Activated CD4-positive, alpha-beta T cell treated with anti-CD3 and anti-CD28 coated beads, Interleukin-2, amount 10 ng/mL, durations not matched to agents 24 days and 14 days (primary cell): ENCODE measurements at regions of chr1 and their contacts with region 1.

Region 1: DNA sequence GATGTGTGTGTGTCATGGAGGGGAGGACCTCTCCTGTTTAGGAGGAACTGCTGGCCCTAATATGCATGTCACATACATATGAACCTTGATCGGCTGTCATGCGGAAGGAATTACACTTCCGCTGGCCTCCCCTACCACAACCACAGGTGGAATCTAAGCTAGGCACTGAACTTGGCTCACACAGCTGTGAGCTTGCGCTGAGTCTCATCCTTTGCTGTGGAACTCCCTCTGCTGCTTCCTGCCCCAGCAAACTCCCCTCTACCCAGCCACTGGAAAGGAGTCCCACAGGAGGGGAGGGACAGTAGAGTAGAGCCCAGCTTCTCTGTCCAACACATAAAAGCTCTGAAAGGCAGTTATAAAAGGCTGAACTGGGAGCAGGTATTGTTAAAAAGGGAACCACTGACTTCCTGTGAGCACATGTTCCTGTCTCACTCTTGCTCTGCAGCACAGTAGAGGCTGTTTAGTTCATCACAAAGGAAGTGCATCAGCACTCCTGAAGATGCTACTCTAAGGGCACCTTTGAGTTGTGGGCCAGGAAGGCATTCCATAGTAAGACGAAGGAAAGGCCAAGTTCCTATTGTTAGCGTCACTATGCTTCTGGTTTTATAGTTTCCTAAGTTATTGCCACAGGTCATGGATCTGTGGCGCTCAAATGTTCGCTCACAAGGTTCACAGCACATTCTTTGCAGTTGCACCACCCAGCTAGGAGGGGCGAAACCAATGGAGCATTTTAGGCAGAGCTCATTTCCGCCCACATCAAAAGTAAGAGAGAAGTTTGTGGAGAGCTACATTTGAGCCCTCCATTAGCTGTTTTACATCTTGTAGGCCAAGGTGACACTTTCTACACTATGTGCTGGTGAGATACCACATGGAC is 17.7 kb upstream of the PTPRC start:
- DNase-seq: peak; percentile 92
- H3K4me3 Mint-ChIP-seq: peak overlapping the region; percentile 85
- H3K27ac Mint-ChIP-seq: peak overlapping the region; percentile 99
- H3K4me1 Mint-ChIP-seq: peaks cover 64% of the 10 kb centered on the region
- H3K27me3 Mint-ChIP-seq: no peaks in the 10 kb centered on the region

Region 2: GRCh38 chr1:197902454-197903195 is 718.6 kb before region 1 on chr1 and contains the start of gene C1orf53:
- intact Hi-C with region 1: loop called (anchors 10 kb)
- DNase-seq: peak; percentile 94
- H3K4me3 Mint-ChIP-seq: peak within 1 kb of the TSS; percentile 83
- H3K27ac Mint-ChIP-seq: peak within 1 kb of the TSS; percentile 80
- H3K4me1 Mint-ChIP-seq: peaks cover 8% of the 10 kb centered on the region
- H3K27me3 Mint-ChIP-seq: peaks cover 68% of the 10 kb centered on the region
- total RNA-seq, gene C1orf53: 1.0 and 1.3 TPM in 2 replicates

Region 3: GRCh38 chr1:198416296-198416695 is 204.9 kb before region 1 on chr1:
- intact Hi-C with region 1: no loop called
- DNase-seq: no peak
- H3K4me3 Mint-ChIP-seq: no peak overlapping the region
- H3K27ac Mint-ChIP-seq: no peak overlapping the region
- H3K4me1 Mint-ChIP-seq: no peaks in the 10 kb centered on the region
- H3K27me3 Mint-ChIP-seq: peaks cover 33% of the 10 kb centered on the region

Region 4: GRCh38 chr1:198577444-198577843 is 43.7 kb before region 1 on chr1:
- intact Hi-C with region 1: no loop called
- DNase-seq: no peak
- H3K4me3 Mint-ChIP-seq: no peak overlapping the region
- H3K27ac Mint-ChIP-seq: no peak overlapping the region
- H3K4me1 Mint-ChIP-seq: peaks cover 5% of the 10 kb centered on the region
- H3K27me3 Mint-ChIP-seq: no peaks in the 10 kb centered on the region

Region 5: GRCh38 chr1:198601936-198602889 is 19.0 kb before region 1 on chr1:
- intact Hi-C with region 1: loop called (anchors 2 kb)
- DNase-seq: no peak
- H3K4me3 Mint-ChIP-seq: peak overlapping the region; percentile 32
- H3K27ac Mint-ChIP-seq: peak overlapping the region; percentile 83
- H3K4me1 Mint-ChIP-seq: peaks cover 55% of the 10 kb centered on the region
- H3K27me3 Mint-ChIP-seq: no peaks in the 10 kb centered on the region

Region 6: DNA sequence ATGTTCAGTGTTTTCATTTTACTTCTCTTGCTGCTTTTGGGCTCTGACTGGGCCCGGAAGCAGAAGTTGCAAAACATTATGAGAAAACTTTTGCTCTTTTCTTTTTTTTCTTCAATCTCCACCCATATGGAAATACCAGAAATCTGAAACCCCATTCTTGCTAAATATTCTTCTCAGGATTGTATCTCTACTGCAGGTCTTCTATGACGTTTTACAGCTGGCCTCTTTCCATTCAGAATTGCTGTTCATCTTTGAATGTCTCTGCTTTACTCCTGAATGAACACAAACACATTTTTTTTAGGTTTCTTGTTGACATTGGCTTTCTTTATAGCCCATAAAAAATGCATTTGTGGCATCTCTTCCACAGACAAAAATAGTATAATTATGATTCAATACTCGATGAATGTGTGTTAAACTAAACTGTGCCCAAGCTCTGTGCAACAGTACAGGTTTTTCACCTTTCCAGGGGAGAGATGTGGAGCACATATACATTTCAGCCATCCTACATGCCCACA is 36.4 kb after region 1 on chr1:
- intact Hi-C with region 1: loop called (anchors 2 kb)
- DNase-seq: peak; percentile 77
- H3K4me3 Mint-ChIP-seq: peak overlapping the region; percentile 92
- H3K27ac Mint-ChIP-seq: peak overlapping the region; percentile 86
- H3K4me1 Mint-ChIP-seq: peaks cover 43% of the 10 kb centered on the region
- H3K27me3 Mint-ChIP-seq: no peaks in the 10 kb centered on the region